KBM-7 (cell line): ENCODE measurements at regions of chr19 and their contacts with region 1.

Region 1: GRCh38 chr19:15672580-15673175 is at the start of gene CYP4F12:
- DNase-seq: peak; percentile 7

Region 2: DNA sequence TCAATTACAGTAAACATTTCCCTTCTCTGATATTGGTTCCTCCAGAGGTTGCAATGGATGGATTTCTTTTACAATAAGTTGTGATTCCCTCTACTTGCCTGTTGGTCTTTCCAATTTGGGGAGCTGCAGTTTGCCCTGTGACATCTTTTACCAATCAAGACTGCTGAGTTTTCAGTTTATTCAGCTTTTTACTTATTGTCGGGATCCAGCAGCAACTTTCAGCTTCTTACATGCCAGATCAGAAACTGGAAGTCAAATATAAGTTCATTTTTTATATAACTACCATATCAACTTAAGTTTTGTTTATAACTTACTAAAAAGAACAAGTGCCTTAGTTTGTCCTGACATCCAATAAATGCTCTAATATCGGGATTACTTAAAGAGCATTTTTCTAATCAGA is 75.6 kb after region 1 on chr19:
- in situ Hi-C with region 1: no loop called
- DNase-seq: no peak

Region 3: GRCh38 chr19:15779756-15780476 is 107.2 kb after region 1 on chr19:
- in situ Hi-C with region 1: loop called (anchors 5 kb)
- DNase-seq: no peak

Region 4: DNA sequence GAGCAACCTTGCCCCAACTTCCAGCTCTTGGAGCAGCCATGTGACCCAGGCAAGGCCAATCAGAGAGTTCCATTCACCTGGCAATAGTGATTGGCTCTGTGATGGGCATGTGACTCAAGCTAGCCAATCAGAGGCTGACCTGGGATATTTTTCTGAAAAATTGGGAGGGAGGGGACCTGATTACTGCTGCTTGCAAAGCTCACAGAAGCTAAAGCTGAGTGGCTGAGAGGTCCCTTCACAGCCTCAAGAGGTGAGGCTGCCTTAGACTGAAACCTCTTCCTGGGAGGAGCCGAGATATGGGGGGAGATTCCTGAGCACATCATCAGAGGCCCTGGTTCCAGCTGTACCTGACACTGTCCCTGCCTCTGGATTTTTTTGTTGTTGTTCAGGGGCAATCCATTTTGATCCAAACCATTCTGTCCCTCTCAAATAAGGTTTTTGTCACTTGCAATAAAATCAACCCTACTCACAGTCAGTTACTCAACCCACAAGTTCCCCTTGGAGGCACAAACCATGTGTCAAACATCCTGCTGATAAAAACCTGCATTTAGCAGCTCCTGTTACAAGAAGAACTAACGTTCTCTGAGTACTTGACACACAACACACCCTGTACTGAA is 495.9 kb after region 1 on chr19:
- in situ Hi-C with region 1: no loop called
- DNase-seq: peak; percentile 90